Spleen (tissue), 13 donors: ENCODE measurements at regions of chr2 and their contacts with region 1.

Region 1: DNA sequence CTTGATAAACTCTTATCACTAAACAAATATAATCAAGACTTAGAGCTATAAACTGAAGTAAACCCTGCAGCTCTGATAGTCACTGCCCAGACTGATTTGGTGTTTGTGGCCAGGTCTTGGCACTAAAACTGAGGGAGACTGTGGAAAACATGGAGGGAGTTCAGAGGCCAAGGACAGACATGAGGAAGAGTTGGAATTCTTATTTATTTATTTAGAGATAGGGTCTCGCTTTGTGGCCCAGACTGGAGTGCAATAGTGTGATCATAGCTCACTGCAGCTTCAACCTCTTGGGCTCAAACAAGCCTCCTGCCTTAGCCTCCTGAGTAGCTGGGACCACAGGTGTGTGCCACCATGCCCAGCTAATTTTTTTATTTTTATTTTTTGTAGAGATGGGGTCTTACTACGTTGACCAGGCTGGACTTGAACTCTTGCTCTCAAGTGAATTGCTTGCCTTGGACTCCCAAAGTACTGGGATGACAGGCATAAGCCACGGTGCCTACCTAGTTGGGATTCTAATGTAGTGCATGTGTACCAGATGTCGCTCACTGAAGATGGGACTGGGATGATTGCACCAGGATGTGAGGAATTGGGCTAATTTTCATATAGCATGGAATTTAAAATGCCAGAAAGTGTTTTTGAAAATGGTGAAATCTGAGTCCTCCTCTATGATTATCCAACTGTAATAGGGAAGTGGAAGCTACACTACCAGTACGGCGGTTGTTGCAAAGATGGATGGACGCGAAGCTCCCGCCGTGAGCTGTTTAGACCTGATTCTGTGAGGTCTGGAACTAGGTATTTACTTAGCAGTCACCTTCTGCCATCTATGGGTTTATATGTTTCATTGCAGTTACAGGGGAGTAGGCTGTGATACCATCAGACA is 52.7 kb upstream of the CTLA4 start:
- DNase-seq: peak; percentile 76
- H3K4me3 ChIP-seq: peak overlapping the region in 1 of 8 donors; percentile 27
- H3K27ac ChIP-seq: peak overlapping the region in 6 of 8 donors; percentile 9 to 40 (median 34)
- H3K4me1 ChIP-seq: peaks cover 18 to 46% (median 36%) of the 10 kb centered on the region in 6 donors
- H3K27me3 ChIP-seq: peaks cover 0 to 50% (median 0%) of the 10 kb centered on the region in 7 donors
- CTCF ChIP-seq: peak; percentile 67 to 92 (median 81)
- POLR2A ChIP-seq: no peak

Region 2: DNA sequence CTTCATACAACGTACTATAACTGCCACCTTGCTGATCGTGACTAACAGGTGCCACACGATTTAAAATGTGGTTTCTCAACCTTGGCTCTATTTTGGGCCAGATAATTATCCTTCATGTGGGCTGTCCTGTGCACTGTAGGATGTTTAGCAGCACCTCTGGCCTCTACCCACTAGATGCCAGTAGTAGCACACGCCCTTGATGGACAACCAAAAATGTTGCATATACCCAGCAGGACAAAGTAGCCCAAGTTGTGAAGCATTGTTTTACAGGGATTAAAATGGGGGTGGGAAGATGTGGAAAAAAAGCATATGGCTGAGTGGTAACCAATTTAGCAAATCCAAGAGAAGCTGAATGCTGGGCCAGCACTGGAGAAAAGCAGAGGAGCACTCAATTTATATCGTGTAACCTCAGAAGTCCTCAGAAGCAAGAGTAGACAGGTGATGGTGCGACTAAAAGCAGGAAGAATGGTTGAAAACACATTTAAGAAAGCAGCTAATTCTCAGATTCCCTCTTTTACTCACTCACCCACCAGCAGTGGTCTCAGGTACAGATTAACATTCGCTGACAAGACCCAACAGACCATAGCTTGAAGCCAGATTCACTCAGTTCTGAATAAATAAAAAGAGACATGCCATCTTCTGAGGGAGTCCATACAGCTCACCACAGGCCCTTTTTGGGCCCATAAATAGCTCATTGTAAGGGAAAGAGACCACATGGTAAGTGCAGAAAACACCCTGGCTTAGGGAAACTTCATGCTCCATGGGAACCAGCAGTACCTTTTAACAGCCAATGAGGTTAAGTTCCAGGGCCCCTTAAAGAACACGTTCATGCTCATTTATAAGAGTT is 330.4 kb before region 1 on chr2:
- intact Hi-C with region 1: loop called (anchors 5 kb)
- DNase-seq: no peak
- H3K4me3 ChIP-seq: no peak overlapping the region
- H3K27ac ChIP-seq: peak overlapping the region in 1 of 8 donors; percentile 34
- H3K4me1 ChIP-seq: peaks cover 0 to 15% (median 4%) of the 10 kb centered on the region in 6 donors
- H3K27me3 ChIP-seq: no peaks in the 10 kb centered on the region
- CTCF ChIP-seq: peak; percentile 23 to 72 (median 57)
- POLR2A ChIP-seq: no peak

Region 3: GRCh38 chr2:203683932-203684556 is 130.9 kb before region 1 on chr2:
- intact Hi-C with region 1: loop called (anchors 10 kb)
- DNase-seq: no peak
- H3K4me3 ChIP-seq: no peak overlapping the region
- H3K27ac ChIP-seq: peak overlapping the region; percentile 25 to 77 (median 72)
- H3K4me1 ChIP-seq: peaks cover 20 to 72% (median 39%) of the 10 kb centered on the region in 6 donors
- H3K27me3 ChIP-seq: peaks cover 0 to 7% (median 0%) of the 10 kb centered on the region in 7 donors
- CTCF ChIP-seq: no peak
- POLR2A ChIP-seq: no peak

Region 4: DNA sequence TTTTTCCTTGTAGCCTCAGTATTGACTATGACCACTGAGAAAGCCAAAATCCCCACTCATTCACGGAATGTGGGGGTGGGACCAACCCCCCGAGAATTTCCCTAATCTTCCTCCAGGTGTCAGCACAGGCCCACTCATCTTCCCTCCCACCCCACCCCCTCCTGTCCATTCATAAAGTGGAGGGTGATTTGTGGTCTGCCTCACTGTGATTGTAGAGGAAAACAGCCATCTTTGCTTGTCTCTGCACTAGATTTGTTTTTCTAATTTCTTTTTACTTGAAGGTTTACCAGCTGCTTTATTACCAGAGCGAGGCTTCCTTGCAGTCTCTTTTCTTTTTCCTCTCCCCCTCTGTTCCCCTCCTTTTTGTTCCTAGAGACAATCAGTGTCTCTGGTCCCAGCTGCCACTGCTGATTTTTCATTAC is 293.4 kb after region 1 on chr2:
- intact Hi-C with region 1: no loop called
- DNase-seq: no peak
- H3K4me3 ChIP-seq: no peak overlapping the region
- H3K27ac ChIP-seq: peak overlapping the region in 6 of 8 donors; percentile 10 to 66 (median 48)
- H3K4me1 ChIP-seq: peaks cover 13 to 44% (median 37%) of the 10 kb centered on the region in 6 donors
- H3K27me3 ChIP-seq: peaks cover 0 to 17% (median 0%) of the 10 kb centered on the region in 7 donors
- CTCF ChIP-seq: peak in 10 of 11 experiments; percentile 36 to 73 (median 64)
- POLR2A ChIP-seq: no peak